T-cell (primary cell): ENCODE measurements at regions of chr7 and their contacts with region 1.

Region 1: GRCh38 chr7:130982160-130982638 is 248.2 kb upstream of the KLF14 start:
- DNase-seq: peak in 7 of 35 experiments; percentile 17 to 73 (median 20)
- ATAC-seq: peak; percentile 68 to 81 (median 77)
- H3K4me3 ChIP-seq: no peak overlapping the region
- H3K4me3 Mint-ChIP-seq: no peak overlapping the region
- H3K27ac ChIP-seq: peak overlapping the region; percentile 79
- H3K27ac Mint-ChIP-seq: no peak overlapping the region
- H3K4me1 ChIP-seq: peaks cover 0 to 48% of the 10 kb centered on the region in 2 experiments
- H3K4me1 Mint-ChIP-seq: peaks cover 42 to 54% (median 50%) of the 10 kb centered on the region in 3 donors
- H3K27me3 ChIP-seq: no peaks in the 10 kb centered on the region
- H3K27me3 Mint-ChIP-seq: no peaks in the 10 kb centered on the region

Region 2: GRCh38 chr7:130896898-130897514 is 85.2 kb before region 1 on chr7:
- CTCF ChIA-PET with region 1: interaction called, 13 to 36 read pairs
- POLR2A ChIA-PET with region 1: interaction called, 3 to 7 read pairs
- DNase-seq: peak; percentile 30 to 89 (median 70)
- ATAC-seq: peak; percentile 68 to 79 (median 76)
- H3K4me3 ChIP-seq: no peak overlapping the region
- H3K4me3 Mint-ChIP-seq: peak overlapping the region in 1 of 3 donors; percentile 48
- H3K27ac ChIP-seq: peak overlapping the region; percentile 19
- H3K27ac Mint-ChIP-seq: peak overlapping the region; percentile 78 to 89
- H3K4me1 ChIP-seq: peaks cover 3 to 61% of the 10 kb centered on the region in 2 experiments
- H3K4me1 Mint-ChIP-seq: peaks cover 70 to 92% (median 85%) of the 10 kb centered on the region in 3 donors
- H3K27me3 ChIP-seq: no peaks in the 10 kb centered on the region
- H3K27me3 Mint-ChIP-seq: no peaks in the 10 kb centered on the region

Region 3: GRCh38 chr7:130951303-130951975 is 30.8 kb before region 1 on chr7:
- CTCF ChIA-PET with region 1: interaction called, 3 to 17 read pairs
- POLR2A ChIA-PET with region 1: interaction called in 1 of 2 experiments, 9 read pairs
- DNase-seq: peak in 5 of 35 experiments; percentile 21 to 78 (median 32)
- ATAC-seq: peak in 3 of 4 experiments; percentile 15 to 56 (median 34)
- H3K4me3 ChIP-seq: no peak overlapping the region
- H3K4me3 Mint-ChIP-seq: no peak overlapping the region
- H3K27ac ChIP-seq: peak overlapping the region; percentile 97
- H3K27ac Mint-ChIP-seq: no peak overlapping the region
- H3K4me1 ChIP-seq: peaks cover 0 to 55% of the 10 kb centered on the region in 2 experiments
- H3K4me1 Mint-ChIP-seq: peaks cover 21 to 66% (median 58%) of the 10 kb centered on the region in 3 donors
- H3K27me3 ChIP-seq: no peaks in the 10 kb centered on the region
- H3K27me3 Mint-ChIP-seq: no peaks in the 10 kb centered on the region

Region 4: DNA sequence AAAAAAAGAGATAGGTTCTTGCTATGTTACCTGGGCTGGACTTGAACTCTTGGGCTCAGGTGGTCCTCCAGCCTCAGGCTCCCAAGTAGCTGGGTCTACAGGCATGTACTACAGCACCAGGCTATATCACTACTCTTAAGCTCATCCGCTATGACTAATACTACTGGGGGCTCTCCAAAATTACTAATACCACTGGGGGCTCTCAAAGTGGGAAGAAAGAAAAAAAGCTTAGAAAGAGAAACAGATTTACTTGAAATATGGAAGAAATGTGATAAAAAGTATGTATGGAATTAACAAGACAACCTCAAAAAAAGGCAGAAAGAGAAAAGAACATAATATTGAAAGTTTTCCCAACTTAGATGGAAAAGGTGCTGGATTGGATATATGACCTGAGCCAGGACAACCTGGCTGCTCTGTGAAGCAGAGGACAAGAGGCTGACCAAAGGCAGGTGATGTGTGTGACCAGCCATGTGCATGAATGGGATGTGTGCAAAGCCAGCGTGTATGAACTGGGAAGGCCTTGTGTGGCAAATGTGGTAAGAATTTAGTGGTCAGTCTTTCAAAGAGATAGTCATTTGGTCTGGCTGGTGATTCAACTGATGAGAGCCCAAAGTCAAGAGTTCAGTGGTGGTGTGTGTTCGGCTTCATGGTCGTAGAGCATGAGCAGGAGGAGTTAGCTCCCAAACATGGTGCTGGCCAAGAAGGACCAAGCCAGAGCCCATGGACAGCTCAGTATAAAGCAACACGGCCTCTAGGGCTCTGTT is 15.8 kb before region 1 on chr7:
- CTCF ChIA-PET with region 1: interaction called, 10 to 15 read pairs
- POLR2A ChIA-PET with region 1: interaction called in 1 of 2 experiments, 6 read pairs
- DNase-seq: no peak
- ATAC-seq: no peak
- H3K4me3 ChIP-seq: no peak overlapping the region
- H3K4me3 Mint-ChIP-seq: no peak overlapping the region
- H3K27ac ChIP-seq: no peak overlapping the region
- H3K27ac Mint-ChIP-seq: peak overlapping the region; percentile 47 to 56
- H3K4me1 ChIP-seq: peaks cover 11 to 35% of the 10 kb centered on the region in 2 experiments
- H3K4me1 Mint-ChIP-seq: peaks cover 60 to 71% (median 63%) of the 10 kb centered on the region in 3 donors
- H3K27me3 ChIP-seq: no peaks in the 10 kb centered on the region
- H3K27me3 Mint-ChIP-seq: no peaks in the 10 kb centered on the region

Region 5: DNA sequence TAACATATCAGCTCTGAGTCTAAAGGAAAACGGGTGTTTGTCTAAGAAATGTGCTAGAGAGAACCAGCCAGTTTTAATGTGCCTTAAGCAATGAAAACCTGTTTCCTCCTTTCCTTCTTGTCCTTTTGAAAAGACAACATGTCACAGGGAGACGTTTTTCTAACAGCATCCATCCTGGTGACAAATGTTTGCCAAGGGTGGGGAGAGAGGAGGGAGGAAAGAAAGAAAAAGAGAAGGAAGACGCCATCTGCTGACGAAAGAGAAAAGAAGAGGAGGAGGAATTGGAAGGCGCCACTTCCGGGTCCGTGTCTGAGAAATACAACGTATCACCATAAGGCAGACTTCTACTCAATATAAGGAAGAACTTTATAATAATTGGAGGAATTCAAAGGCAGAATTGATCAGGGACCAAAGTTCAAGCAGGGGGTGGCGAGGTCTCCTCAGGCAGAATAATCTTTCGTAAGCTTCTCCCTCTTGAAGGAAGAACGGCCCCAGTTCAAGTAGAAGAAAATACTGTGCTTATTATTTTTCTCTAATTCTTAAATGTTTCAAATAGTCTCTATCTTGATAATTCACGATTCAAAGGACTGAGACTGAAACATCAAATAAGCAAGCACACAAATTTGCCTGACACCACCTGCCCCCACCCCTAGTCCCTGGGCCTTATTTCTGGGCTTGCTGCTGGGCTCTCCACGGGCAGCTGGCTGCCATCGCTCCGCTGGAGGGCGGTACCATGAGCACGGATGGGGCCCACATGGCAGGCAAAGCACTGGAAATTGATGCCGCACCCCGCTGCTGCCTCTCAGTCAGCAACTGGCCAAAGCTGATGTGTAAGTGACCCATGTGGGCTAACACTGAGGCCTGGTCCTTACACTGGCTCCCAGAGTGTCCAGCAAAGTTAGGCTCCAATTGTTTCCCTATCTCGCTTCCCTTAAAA is 25.5 kb after region 1 on chr7:
- CTCF ChIA-PET with region 1: interaction called, 9 to 34 read pairs
- POLR2A ChIA-PET with region 1: interaction called in 1 of 2 experiments, 3 read pairs
- DNase-seq: peak in 32 of 35 experiments; percentile 32 to 80 (median 54)
- ATAC-seq: peak; percentile 51 to 55 (median 53)
- H3K4me3 ChIP-seq: peak overlapping the region in 1 of 2 donors; percentile 1
- H3K4me3 Mint-ChIP-seq: peak overlapping the region; percentile 17 to 52 (median 41)
- H3K27ac ChIP-seq: peak overlapping the region; percentile 69
- H3K27ac Mint-ChIP-seq: peak overlapping the region; percentile 92 to 95
- H3K4me1 ChIP-seq: peaks cover 6 to 42% of the 10 kb centered on the region in 2 experiments
- H3K4me1 Mint-ChIP-seq: peaks cover 86 to 95% (median 91%) of the 10 kb centered on the region in 3 donors
- H3K27me3 ChIP-seq: no peaks in the 10 kb centered on the region
- H3K27me3 Mint-ChIP-seq: no peaks in the 10 kb centered on the region